Esophagus squamous epithelium (tissue), 5 donors: ENCODE measurements at regions of chr9 and their contacts with region 1.

Region 1: DNA sequence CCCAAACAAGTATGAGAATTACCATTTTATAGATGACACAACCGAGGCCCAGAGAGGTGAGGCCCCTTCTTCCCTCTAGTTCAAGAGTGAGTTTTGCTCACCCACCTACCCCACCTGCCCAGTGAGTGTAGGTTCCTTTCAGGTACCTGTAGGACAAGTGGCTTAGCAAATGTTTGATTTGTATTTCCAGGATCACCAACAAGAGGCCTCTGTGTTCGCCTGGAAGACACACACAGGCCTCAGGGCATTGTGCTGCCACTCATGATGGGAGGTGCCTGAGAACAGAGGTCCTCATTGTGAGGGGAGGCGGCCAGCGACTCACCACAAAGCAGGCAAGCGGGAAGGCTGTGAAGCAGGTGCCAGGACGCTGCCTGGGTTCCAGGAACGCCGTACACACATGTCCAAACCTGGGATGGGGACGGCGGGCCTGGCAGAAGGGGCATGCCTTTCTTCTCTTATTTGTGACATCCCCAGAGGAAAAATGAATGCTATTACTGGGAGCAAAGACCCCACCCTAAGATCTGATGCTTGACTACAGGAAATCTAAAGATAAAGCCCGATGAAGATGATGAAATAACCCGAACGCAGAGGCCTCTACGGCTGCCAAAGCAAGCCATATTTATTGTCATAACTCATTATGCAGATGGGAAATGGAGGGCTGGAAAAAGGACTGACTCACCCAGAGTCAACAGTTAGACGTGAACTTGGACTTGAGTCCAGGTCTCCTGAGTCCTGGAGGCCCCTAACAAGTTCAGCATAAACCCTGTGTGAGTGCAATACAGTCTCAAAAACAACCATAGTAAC is 60.2 kb upstream of the SLC25A51 start:
- DNase-seq: no peak
- H3K4me3 ChIP-seq: no peak overlapping the region
- H3K27ac ChIP-seq: peak overlapping the region; percentile 83 to 91 (median 85)
- H3K4me1 ChIP-seq: peaks cover 47 to 67% (median 57%) of the 10 kb centered on the region in 3 donors
- H3K27me3 ChIP-seq: no peaks in the 10 kb centered on the region
- CTCF ChIP-seq: no peak
- POLR2A ChIP-seq: no peak

Region 2: GRCh38 chr9:37740636-37741328 is 223.4 kb before region 1 on chr9:
- intact Hi-C with region 1: no loop called
- DNase-seq: no peak
- H3K4me3 ChIP-seq: no peak overlapping the region
- H3K27ac ChIP-seq: no peak overlapping the region
- H3K4me1 ChIP-seq: no peaks in the 10 kb centered on the region
- H3K27me3 ChIP-seq: no peaks in the 10 kb centered on the region
- CTCF ChIP-seq: no peak
- POLR2A ChIP-seq: no peak

Region 3: DNA sequence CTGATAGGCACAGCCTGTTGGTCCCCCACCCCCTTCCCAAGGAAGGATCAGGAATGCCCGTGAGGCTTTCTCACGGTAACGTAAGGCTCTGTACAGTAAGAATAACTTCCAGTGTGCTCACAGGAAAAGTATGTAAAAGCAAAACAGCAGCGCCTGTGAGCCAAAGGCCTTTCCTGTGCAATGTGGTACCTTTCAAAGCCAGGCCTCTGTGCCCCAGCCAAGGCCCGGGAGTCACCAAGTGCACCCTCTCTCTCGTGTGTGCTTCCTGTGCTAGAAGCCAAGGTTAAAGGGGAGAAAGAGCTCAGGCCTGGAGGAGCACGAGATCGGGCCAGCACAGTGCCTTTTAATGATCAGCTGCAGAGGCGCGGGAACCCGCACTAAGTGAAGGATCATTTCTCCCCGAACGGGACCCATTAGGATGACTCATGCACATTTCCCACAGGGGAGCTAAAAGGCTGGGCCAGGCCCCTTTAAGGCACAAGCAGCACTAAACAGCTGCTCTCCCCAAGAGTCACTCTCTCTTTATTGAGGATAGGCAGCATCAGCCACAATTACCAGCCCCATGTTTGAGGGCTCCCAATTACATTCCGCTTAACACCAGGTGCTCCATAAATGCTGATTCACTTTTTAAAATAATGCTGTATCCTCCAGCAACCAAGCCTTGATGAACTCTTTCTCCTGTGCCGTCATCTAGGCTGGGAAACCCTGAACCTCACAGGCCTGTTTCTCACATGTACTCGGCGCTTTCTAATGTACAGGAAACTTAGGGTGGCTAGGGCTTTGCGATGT is 62.1 kb after region 1 on chr9:
- intact Hi-C with region 1: loop called (anchors 10 kb)
- DNase-seq: no peak
- H3K4me3 ChIP-seq: no peak overlapping the region
- H3K27ac ChIP-seq: peak overlapping the region; percentile 82 to 87 (median 86)
- H3K4me1 ChIP-seq: peaks cover 51 to 99% (median 55%) of the 10 kb centered on the region in 3 donors
- H3K27me3 ChIP-seq: no peaks in the 10 kb centered on the region
- CTCF ChIP-seq: no peak
- POLR2A ChIP-seq: no peak